Caco-2 (cell line): ENCODE measurements at regions of chr2 and their contacts with region 1.

Region 1: DNA sequence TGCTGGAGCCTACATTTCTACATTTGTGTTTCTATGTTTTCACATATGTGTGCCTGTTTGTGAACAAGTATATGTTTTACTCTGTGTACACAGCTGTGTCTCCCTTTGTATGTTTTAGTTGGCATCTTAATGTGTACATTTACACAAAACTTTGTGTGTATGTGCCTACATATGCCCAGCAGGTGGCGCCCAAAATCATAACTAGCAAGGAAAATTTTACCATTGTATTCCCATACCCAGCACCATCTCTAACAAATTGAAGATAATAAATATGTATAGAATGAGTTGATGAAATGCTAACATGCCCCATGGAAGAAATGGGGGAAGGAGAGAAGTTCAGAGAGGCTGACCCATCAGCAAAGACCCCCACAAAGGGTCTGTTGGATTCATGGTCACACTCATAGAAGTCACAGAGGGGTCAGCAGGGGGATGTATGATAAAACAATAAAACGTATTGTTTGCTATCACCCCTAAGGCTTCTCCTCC is 48.1 kb downstream of the PKDCC start:
- DNase-seq: peak; percentile 74
- H3K4me3 ChIP-seq: no peak overlapping the region
- H3K4me3 Mint-ChIP-seq: no peak overlapping the region
- H3K27ac Mint-ChIP-seq: no peak overlapping the region
- H3K4me1 ChIP-seq: peaks cover 36% of the 10 kb centered on the region
- H3K4me1 Mint-ChIP-seq: peaks cover 43% of the 10 kb centered on the region
- H3K27me3 ChIP-seq: no peaks in the 10 kb centered on the region
- H3K27me3 Mint-ChIP-seq: no peaks in the 10 kb centered on the region
- CTCF ChIP-seq: peak; percentile 77 to 91

Region 2: DNA sequence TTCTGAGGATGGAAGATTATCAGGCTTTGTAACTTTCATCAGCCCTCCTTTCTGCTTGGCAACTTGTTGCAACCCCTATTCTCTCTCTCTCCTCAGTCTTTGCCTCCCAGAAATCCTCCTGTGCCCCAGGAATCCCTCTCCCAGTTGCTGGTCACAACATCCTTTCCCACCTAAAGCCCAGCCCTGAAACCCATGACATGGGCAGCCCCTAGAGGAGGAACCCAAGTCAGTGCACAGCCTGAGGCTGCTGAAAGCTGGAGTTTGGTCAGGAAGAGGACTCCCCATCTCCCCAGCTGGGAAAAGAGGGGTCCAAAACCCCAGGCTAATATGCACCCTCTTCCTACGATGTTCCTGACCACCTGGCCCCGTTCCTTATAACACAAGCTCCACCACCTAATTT is 18.6 kb before region 1 on chr2:
- CTCF ChIA-PET with region 1: no interaction called
- POLR2A ChIA-PET with region 1: no interaction called
- intact Hi-C with region 1: no loop called
- DNase-seq: no peak
- H3K4me3 ChIP-seq: no peak overlapping the region
- H3K4me3 Mint-ChIP-seq: no peak overlapping the region
- H3K27ac Mint-ChIP-seq: peak overlapping the region; percentile 30
- H3K4me1 ChIP-seq: peaks cover 18% of the 10 kb centered on the region
- H3K4me1 Mint-ChIP-seq: peaks cover 35% of the 10 kb centered on the region
- H3K27me3 ChIP-seq: no peaks in the 10 kb centered on the region
- H3K27me3 Mint-ChIP-seq: no peaks in the 10 kb centered on the region
- CTCF ChIP-seq: peak in 1 of 2 experiments; percentile 1

Region 3: GRCh38 chr2:42141687-42142546 is 46.0 kb after region 1 on chr2:
- CTCF ChIA-PET with region 1: no interaction called
- POLR2A ChIA-PET with region 1: interaction called, 7 read pairs
- intact Hi-C with region 1: loop called (anchors 1 kb)
- DNase-seq: peak; percentile 91 to 96
- H3K4me3 ChIP-seq: peak overlapping the region; percentile 17
- H3K4me3 Mint-ChIP-seq: peak overlapping the region; percentile 71
- H3K27ac Mint-ChIP-seq: peak overlapping the region; percentile 95
- H3K4me1 ChIP-seq: peaks cover 53% of the 10 kb centered on the region
- H3K4me1 Mint-ChIP-seq: peaks cover 55% of the 10 kb centered on the region
- H3K27me3 ChIP-seq: no peaks in the 10 kb centered on the region
- H3K27me3 Mint-ChIP-seq: no peaks in the 10 kb centered on the region
- CTCF ChIP-seq: no peak

Region 4: GRCh38 chr2:42191285-42192009 is 95.5 kb after region 1 on chr2:
- CTCF ChIA-PET with region 1: interaction called, 8 read pairs
- POLR2A ChIA-PET with region 1: no interaction called
- intact Hi-C with region 1: loop called (anchors 1 kb)
- DNase-seq: peak; percentile 47 to 82
- H3K4me3 ChIP-seq: no peak overlapping the region
- H3K4me3 Mint-ChIP-seq: peak overlapping the region; percentile 65
- H3K27ac Mint-ChIP-seq: peak overlapping the region; percentile 77
- H3K4me1 ChIP-seq: peaks cover 84% of the 10 kb centered on the region
- H3K4me1 Mint-ChIP-seq: peaks cover 52% of the 10 kb centered on the region
- H3K27me3 ChIP-seq: no peaks in the 10 kb centered on the region
- H3K27me3 Mint-ChIP-seq: no peaks in the 10 kb centered on the region
- CTCF ChIP-seq: no peak

Region 5: DNA sequence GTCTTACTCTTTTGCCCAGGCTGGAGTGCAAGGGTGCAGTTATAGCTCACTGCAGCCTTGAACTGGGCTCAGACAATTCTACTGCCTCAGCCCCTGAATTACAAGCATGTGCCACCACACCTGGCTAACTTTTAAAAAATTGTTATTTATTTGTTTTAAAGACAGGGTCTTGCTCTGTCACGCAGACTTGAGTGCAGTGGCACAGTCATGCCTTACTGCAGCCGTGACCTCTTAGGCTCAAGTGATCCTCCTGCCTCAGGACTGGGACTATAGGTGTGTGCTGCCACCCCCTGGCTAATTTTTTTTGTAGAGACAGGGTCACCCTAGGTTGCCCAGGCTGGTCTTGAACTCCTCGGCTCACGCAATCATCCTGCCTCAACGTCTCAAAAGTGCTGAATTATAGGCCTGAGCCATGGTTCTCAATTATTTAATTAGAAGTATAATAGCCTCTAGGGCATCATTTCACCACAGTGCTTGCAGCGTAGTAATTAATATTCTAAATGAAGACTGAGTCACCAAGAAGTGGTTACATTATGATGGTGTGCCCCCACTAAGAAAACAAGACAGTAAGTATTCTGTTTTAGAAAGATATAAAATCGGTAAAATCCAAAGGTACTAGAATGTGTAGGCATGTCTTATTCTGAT is 142.8 kb after region 1 on chr2:
- CTCF ChIA-PET with region 1: interaction called, 5 read pairs
- POLR2A ChIA-PET with region 1: interaction called, 7 read pairs
- intact Hi-C with region 1: loop called (anchors 1 kb)
- DNase-seq: peak; percentile 75 to 78
- H3K4me3 ChIP-seq: no peak overlapping the region
- H3K4me3 Mint-ChIP-seq: no peak overlapping the region
- H3K27ac Mint-ChIP-seq: no peak overlapping the region
- H3K4me1 ChIP-seq: peaks cover 33% of the 10 kb centered on the region
- H3K4me1 Mint-ChIP-seq: peaks cover 49% of the 10 kb centered on the region
- H3K27me3 ChIP-seq: no peaks in the 10 kb centered on the region
- H3K27me3 Mint-ChIP-seq: no peaks in the 10 kb centered on the region
- CTCF ChIP-seq: peak; percentile 51 to 55

Region 6: GRCh38 chr2:42360890-42361727 is 265.1 kb after region 1 on chr2 and contains the start of gene COX7A2L:
- CTCF ChIA-PET with region 1: no interaction called
- POLR2A ChIA-PET with region 1: no interaction called
- intact Hi-C with region 1: loop called (anchors 1 kb)
- DNase-seq: peak; percentile 98
- H3K4me3 ChIP-seq: peak within 1 kb of the TSS; percentile 91
- H3K4me3 Mint-ChIP-seq: peak within 1 kb of the TSS; percentile 89
- H3K27ac Mint-ChIP-seq: peak within 1 kb of the TSS; percentile 97
- H3K4me1 ChIP-seq: peaks cover 8% of the 10 kb centered on the region; the same call in 1 of the 2 replicates
- H3K4me1 Mint-ChIP-seq: peaks cover 15% of the 10 kb centered on the region
- H3K27me3 ChIP-seq: no peaks in the 10 kb centered on the region
- H3K27me3 Mint-ChIP-seq: no peaks in the 10 kb centered on the region
- CTCF ChIP-seq: peak in 1 of 2 experiments; percentile 39
- total RNA-seq, gene COX7A2L: 117 and 125 TPM in 2 replicates